GM13977 (cell line): ENCODE measurements at regions of chr19 and their contacts with region 1.

Region 1: GRCh38 chr19:46850228-46851203 is at the start of gene AP2S1:
- DNase-seq: peak; percentile 97
- CTCF ChIP-seq: no peak

Region 2: GRCh38 chr19:46984077-46985010 is 133.8 kb after region 1 on chr19:
- in situ Hi-C with region 1: loop called (anchors 10 kb)
- DNase-seq: no peak
- CTCF ChIP-seq: no peak